Tibial artery (tissue), 4 donors: ENCODE measurements at regions of chr4 and their contacts with region 1.

Region 1: GRCh38 chr4:113189546-113189945 is 140.1 kb downstream of the ANK2 start:
- DNase-seq: no peak
- H3K4me3 ChIP-seq: no peak overlapping the region
- H3K27ac ChIP-seq: no peak overlapping the region
- H3K4me1 ChIP-seq: no peaks in the 10 kb centered on the region
- H3K27me3 ChIP-seq: no peaks in the 10 kb centered on the region
- CTCF ChIP-seq: no peak

Region 2: DNA sequence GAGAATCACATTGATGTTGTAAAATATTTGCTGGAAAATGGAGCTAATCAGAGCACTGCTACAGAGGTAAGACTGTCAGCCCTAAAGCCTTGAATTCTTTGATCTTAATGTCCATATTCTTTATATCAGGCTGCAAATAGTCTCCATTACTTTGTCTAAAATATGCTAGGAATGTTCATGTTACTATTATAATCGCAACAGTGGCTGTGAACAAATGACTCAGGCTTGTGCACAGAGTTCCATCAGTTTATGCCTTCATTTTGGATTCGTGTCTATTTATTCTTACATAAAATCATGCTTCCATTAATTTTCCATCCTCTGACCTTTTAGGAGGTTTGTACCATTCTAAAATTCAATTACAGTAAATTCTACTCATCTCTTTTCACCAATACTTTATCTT is 42.6 kb after region 1 on chr4:
- intact Hi-C with region 1: no loop called
- DNase-seq: no peak
- H3K4me3 ChIP-seq: no peak overlapping the region
- H3K27ac ChIP-seq: no peak overlapping the region
- H3K4me1 ChIP-seq: no peaks in the 10 kb centered on the region
- H3K27me3 ChIP-seq: no peaks in the 10 kb centered on the region
- CTCF ChIP-seq: no peak

Region 3: GRCh38 chr4:113248320-113248719 is 58.8 kb after region 1 on chr4:
- intact Hi-C with region 1: no loop called
- DNase-seq: no peak
- H3K4me3 ChIP-seq: no peak overlapping the region
- H3K27ac ChIP-seq: no peak overlapping the region
- H3K4me1 ChIP-seq: no peaks in the 10 kb centered on the region
- H3K27me3 ChIP-seq: no peaks in the 10 kb centered on the region
- CTCF ChIP-seq: no peak

Region 4: DNA sequence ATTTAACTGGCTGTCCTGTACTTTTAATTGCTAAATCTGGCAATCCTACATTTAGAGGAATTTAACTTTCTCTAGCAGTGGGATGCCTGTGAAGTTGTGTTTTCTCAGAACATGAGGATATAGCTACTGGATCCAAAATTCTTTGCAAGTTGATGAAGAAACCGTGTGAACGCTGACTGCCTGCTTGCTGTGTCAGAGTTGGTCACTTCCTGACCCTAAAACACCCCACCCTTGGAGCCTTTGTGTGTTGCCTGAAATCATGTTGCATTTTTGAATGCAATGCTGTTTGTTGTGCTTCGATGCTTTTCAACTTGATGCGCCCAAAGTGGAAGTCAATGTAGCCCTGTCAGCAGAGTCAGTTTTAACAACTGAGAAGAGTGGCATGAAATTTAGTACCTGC is 71.1 kb after region 1 on chr4:
- intact Hi-C with region 1: loop called (anchors 2 kb)
- DNase-seq: no peak
- H3K4me3 ChIP-seq: no peak overlapping the region
- H3K27ac ChIP-seq: no peak overlapping the region
- H3K4me1 ChIP-seq: no peaks in the 10 kb centered on the region
- H3K27me3 ChIP-seq: no peaks in the 10 kb centered on the region
- CTCF ChIP-seq: no peak